ENCODE measurements at regions of chr1 and their contacts with region 1.

Region 1: GRCh38 chr1:207963427-207964194 is 52.7 kb upstream of the CD34 start:
- DNase-seq: peak; percentile 75
- H3K4me3 ChIP-seq: peak overlapping the region; percentile 48 to 82 (median 66)
- H3K27ac ChIP-seq: no peak overlapping the region
- H3K4me1 ChIP-seq: peaks cover 28% of the 10 kb centered on the region
- H3K27me3 ChIP-seq: peaks cover 3% of the 10 kb centered on the region
- CTCF ChIP-seq: peak; percentile 84 to 87

Region 2: GRCh38 chr1:207828485-207829158 is 135.0 kb before region 1 on chr1:
- CTCF ChIA-PET with region 1: no interaction called
- dilution Hi-C with region 1: no loop called
- in situ Hi-C with region 1: loop called in 1 of 2 experiments (anchors 10 kb)
- intact Hi-C with region 1: loop called (anchors 1 kb)
- DNase-seq: peak; percentile 71
- H3K4me3 ChIP-seq: no peak overlapping the region
- H3K27ac ChIP-seq: no peak overlapping the region
- H3K4me1 ChIP-seq: peaks cover 15% of the 10 kb centered on the region
- H3K27me3 ChIP-seq: no peaks in the 10 kb centered on the region
- CTCF ChIP-seq: peak; percentile 87 to 95

Region 3: GRCh38 chr1:207878939-207879338 is 84.7 kb before region 1 on chr1:
- CTCF ChIA-PET with region 1: interaction called, 11 read pairs
- dilution Hi-C with region 1: loop called (anchors 5 kb)
- in situ Hi-C with region 1: loop called in 1 of 2 experiments (anchors 5 kb)
- intact Hi-C with region 1: no loop called
- DNase-seq: no peak
- H3K4me3 ChIP-seq: no peak overlapping the region
- H3K27ac ChIP-seq: no peak overlapping the region
- H3K4me1 ChIP-seq: no peaks in the 10 kb centered on the region
- H3K27me3 ChIP-seq: no peaks in the 10 kb centered on the region
- CTCF ChIP-seq: no peak

Region 4: DNA sequence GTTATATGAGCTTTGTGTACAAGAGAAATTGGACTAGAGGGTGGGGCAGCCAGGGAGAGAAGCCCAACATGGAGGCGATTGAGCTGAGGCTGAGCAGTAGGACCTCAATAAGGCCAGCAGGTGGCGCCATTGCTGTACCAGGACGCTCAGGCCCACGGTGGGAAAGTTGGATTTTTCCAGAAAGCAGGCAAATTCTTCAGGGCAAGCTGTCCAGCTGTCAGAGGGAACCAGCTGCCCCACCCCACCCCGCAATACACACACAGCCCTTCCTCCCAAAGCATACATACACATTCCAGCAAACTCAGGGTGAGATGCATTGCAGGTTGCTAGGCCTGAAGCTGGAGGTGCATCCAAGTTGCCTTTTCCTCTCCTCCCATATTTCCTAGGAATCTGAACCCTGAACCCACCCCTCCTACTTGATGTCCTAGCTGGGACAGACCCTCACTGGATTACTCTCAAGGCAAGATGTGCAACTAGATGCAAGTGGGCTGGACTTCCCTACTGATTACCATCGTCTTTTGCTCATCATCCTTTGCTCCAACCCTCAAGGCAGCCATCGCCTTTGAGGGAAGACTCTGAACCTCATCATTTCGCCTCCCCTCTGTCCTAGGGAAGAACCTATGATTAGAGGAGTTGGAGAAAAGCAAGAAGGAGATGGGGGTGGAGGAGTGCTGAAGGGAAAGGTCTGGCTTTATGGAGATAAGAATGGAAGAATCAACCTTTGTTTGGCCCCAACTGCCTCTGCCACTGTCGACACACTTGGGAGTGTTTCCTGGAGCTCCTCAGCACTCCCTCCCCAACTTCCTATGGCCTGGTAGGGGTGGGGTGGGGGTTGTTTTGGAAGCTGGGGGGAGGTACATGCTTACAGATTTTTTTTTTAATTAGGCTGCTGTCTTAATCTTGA is 78.2 kb before region 1 on chr1:
- CTCF ChIA-PET with region 1: interaction called, 8 read pairs
- dilution Hi-C with region 1: loop called (anchors 5 kb)
- in situ Hi-C with region 1: loop called in 1 of 2 experiments (anchors 5 kb)
- intact Hi-C with region 1: loop called (anchors 1 kb)
- DNase-seq: peak; percentile 46
- H3K4me3 ChIP-seq: no peak overlapping the region
- H3K27ac ChIP-seq: no peak overlapping the region
- H3K4me1 ChIP-seq: peaks cover 15% of the 10 kb centered on the region
- H3K27me3 ChIP-seq: no peaks in the 10 kb centered on the region
- CTCF ChIP-seq: peak; percentile 93 to 94

Region 5: DNA sequence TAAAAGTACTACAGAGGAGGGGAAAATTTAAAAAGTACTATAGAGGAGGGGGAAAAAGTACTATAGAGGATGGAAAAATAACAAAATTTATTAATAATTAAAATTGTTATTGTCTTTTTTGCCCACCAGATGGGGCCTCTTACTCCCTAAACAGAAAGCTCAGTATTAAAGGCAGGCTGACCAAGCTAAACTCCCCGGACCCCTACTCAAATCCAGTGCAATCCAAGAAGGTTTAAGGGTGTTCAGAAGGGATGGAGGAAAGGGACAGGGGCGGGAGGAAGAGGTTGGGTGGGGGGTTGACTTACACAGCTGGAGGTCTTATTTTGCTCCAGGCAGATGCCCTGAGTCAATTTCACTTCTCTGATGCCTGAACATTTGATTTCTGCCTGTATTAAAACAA is 66.4 kb before region 1 on chr1:
- CTCF ChIA-PET with region 1: interaction called, 22 read pairs
- dilution Hi-C with region 1: no loop called
- in situ Hi-C with region 1: loop called (anchors 5 to 10 kb)
- intact Hi-C with region 1: loop called (anchors 1 kb)
- DNase-seq: no peak
- H3K4me3 ChIP-seq: no peak overlapping the region
- H3K27ac ChIP-seq: no peak overlapping the region
- H3K4me1 ChIP-seq: no peaks in the 10 kb centered on the region
- H3K27me3 ChIP-seq: no peaks in the 10 kb centered on the region
- CTCF ChIP-seq: peak in 1 of 2 donors; percentile 37

Region 6: DNA sequence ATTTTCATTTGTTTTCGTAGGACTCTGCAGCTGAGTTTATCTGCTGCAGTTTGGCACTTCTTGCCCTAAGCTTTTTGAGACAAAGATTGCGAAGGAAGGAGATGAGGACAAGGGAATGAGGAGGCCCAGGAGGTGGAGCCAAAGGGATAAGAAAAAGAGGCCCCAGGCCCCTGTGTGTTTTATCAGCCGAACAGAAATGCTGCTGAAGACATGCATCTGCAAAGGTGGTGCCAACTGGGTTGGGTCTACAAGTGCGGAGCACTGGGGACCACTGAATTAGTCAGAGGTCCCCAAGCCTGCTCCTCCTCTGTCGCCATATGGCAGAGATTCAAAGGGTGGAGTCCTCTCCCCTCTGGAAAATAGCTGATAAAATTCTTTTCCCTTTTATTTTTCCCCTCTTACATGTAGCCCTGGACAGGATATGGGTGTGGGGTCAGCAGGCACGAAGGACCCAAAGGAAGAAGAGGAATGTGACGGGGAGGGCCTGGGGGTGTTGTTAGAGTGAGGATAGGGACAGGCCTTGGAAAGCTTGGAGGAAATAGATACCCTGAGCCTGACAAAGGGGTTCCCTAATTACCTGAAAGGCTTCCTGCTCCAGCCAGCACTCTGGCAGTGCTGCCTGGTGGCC is 55.4 kb before region 1 on chr1:
- CTCF ChIA-PET with region 1: no interaction called
- dilution Hi-C with region 1: no loop called
- in situ Hi-C with region 1: loop called in 1 of 2 experiments (anchors 10 kb)
- intact Hi-C with region 1: no loop called
- DNase-seq: no peak
- H3K4me3 ChIP-seq: no peak overlapping the region
- H3K27ac ChIP-seq: no peak overlapping the region
- H3K4me1 ChIP-seq: peaks cover 7% of the 10 kb centered on the region
- H3K27me3 ChIP-seq: peaks cover 18% of the 10 kb centered on the region
- CTCF ChIP-seq: no peak

Region 7: GRCh38 chr1:207913951-207914350 is 49.7 kb before region 1 on chr1:
- CTCF ChIA-PET with region 1: no interaction called
- dilution Hi-C with region 1: no loop called
- in situ Hi-C with region 1: loop called in 1 of 2 experiments (anchors 10 kb)
- intact Hi-C with region 1: loop called (anchors 1 kb)
- DNase-seq: no peak
- H3K4me3 ChIP-seq: no peak overlapping the region
- H3K27ac ChIP-seq: no peak overlapping the region
- H3K4me1 ChIP-seq: peaks cover 7% of the 10 kb centered on the region
- H3K27me3 ChIP-seq: peaks cover 23% of the 10 kb centered on the region
- CTCF ChIP-seq: no peak